ENCODE measurements at regions of chr13 and their contacts with region 1.

Region 1: DNA sequence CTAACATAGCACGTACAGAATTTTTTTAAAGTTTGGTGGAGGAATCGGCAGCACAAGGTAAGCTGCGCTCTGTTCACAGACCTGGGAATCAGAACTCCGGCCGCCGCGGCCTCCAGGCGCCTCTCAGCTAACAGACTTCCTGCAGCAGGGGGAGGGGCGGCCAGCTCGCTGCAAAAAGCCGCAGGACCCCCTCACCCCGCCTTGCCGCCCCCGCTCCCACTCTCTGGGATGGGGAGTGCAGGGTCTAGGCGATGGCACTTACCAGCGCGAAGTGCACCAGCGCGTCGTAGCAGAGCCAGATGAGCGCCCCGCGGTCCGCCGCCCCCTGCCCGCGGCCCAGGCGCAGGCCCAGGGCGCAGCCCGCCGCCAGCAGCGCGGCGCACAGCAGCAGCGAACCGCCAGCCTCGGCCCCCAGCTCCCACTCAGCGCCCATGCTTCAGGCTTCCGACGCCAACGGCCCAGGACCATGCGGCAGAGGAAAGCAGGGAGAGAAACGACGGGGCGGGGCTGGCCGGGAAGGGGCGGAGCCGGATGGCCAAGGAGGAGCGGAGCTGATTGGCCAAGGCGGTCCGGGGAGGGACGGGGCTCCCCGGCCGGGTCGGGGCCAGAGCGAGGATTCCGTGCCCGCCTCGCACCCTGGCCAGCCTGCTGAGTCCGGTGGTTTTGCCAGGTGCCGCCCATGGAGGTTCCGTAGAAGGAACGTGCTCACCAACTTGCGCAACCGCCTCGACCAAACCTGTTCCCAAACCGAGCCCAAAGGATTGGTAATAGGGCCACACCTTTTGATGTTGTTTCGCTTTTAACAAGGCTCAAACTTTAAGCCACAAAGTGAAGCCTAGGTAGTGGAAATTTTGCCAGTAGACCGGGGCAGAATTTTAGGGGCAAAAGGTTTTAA is at the start of gene EBPL:
- DNase-seq: peak; percentile 87 to 93 (median 90)
- H3K4me3 ChIP-seq: peak within 1 kb of the TSS; percentile 68 to 97 (median 79)
- H3K27ac ChIP-seq: peak within 1 kb of the TSS; percentile 53 to 84
- H3K4me1 ChIP-seq: peaks cover 19 to 70% (median 42%) of the 10 kb centered on the region in 4 experiments
- H3K27me3 ChIP-seq: no peaks in the 10 kb centered on the region

Region 2: GRCh38 chr13:49792550-49793324 is 101.5 kb after region 1 on chr13 and contains the start of gene KPNA3:
- CTCF ChIA-PET with region 1: interaction called, 6 read pairs
- POLR2A ChIA-PET with region 1: interaction called, 15 read pairs
- DNase-seq: peak; percentile 96 to 98 (median 98)
- H3K4me3 ChIP-seq: peak within 1 kb of the TSS; percentile 86 to 93 (median 89)
- H3K27ac ChIP-seq: peak within 1 kb of the TSS; percentile 88 to 92
- H3K4me1 ChIP-seq: peaks cover 6 to 35% (median 22%) of the 10 kb centered on the region in 4 experiments
- H3K27me3 ChIP-seq: no peaks in the 10 kb centered on the region